Breast epithelium (tissue), 4 donors: ENCODE measurements at regions of chr12 and their contacts with region 1.

Region 1: GRCh38 chr12:93968536-93969285 is 179.7 kb upstream of the PLXNC1 start:
- DNase-seq: no peak
- H3K4me3 ChIP-seq: no peak overlapping the region
- H3K27ac ChIP-seq: no peak overlapping the region
- H3K4me1 ChIP-seq: no peaks in the 10 kb centered on the region
- H3K27me3 ChIP-seq: no peaks in the 10 kb centered on the region
- CTCF ChIP-seq: no peak
- POLR2A ChIP-seq: no peak

Region 2: DNA sequence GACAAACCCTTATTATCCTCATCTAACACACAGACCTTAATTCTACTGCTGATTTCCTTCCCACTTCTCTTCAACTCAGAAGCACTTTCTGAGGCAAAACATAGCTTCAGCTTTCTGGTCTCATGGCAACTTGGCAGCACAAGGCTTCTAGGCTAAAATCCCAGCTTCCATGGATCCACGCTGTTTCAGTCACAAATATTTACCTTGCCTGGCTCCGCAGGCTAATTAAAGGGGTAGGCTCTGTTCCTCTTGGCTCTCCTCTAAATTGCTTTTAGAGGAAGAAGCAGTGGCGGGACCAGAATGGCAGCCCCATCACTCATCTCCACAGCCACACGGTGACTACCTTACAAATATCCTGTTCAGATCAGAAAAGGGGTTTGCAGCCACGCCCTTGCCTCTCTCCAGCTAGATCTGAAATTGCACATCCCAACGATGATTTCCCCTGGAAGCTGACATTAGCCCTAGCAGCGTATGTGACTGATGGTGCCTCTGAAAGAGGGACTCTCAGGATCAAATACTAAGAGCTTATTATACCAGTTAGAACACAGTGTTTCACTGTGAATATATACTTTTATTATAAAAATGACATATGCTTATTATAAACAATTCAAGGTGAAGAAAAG is 812.5 kb before region 1 on chr12:
- intact Hi-C with region 1: no loop called
- DNase-seq: no peak
- H3K4me3 ChIP-seq: no peak overlapping the region
- H3K27ac ChIP-seq: peak overlapping the region; percentile 43 to 68
- H3K4me1 ChIP-seq: no peaks in the 10 kb centered on the region
- H3K27me3 ChIP-seq: no peaks in the 10 kb centered on the region
- CTCF ChIP-seq: no peak
- POLR2A ChIP-seq: no peak

Region 3: GRCh38 chr12:93994721-93995120 is 26.0 kb after region 1 on chr12:
- intact Hi-C with region 1: loop called (anchors 2 kb)
- DNase-seq: no peak
- H3K4me3 ChIP-seq: no peak overlapping the region
- H3K27ac ChIP-seq: no peak overlapping the region
- H3K4me1 ChIP-seq: no peaks in the 10 kb centered on the region
- H3K27me3 ChIP-seq: no peaks in the 10 kb centered on the region
- CTCF ChIP-seq: no peak
- POLR2A ChIP-seq: no peak